RWPE1 (cell line): ENCODE measurements at regions of chr2 and their contacts with region 1.

Region 1: GRCh38 chr2:69538872-69539548 is 101.8 kb upstream of the NFU1 start:
- DNase-seq: peak; percentile 41
- H3K27ac ChIP-seq: no peak overlapping the region
- CTCF ChIP-seq: no peak

Region 2: DNA sequence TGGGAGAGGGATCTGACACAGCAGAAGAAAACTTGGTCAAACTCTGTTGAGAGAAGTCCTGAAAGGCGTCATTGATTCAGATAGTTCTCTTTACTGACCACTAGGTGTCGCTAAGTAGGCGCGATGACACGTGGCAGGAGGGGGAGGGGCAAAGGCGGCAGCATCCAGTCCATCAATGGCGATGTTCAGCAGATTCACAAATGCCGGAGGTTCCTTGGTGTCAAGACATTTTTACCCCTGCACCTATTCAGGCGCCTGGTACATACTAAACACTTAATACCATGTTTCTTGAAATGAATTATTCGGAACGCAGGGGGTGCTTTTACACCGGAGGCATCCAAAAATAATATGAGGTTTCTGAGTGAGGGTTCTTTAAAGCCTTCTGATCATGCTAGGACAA is 1176.9 kb before region 1 on chr2:
- CTCF ChIA-PET with region 1: no interaction called
- POLR2A ChIA-PET with region 1: no interaction called
- DNase-seq: peak; percentile 64
- H3K27ac ChIP-seq: no peak overlapping the region
- CTCF ChIP-seq: peak; percentile 65

Region 3: DNA sequence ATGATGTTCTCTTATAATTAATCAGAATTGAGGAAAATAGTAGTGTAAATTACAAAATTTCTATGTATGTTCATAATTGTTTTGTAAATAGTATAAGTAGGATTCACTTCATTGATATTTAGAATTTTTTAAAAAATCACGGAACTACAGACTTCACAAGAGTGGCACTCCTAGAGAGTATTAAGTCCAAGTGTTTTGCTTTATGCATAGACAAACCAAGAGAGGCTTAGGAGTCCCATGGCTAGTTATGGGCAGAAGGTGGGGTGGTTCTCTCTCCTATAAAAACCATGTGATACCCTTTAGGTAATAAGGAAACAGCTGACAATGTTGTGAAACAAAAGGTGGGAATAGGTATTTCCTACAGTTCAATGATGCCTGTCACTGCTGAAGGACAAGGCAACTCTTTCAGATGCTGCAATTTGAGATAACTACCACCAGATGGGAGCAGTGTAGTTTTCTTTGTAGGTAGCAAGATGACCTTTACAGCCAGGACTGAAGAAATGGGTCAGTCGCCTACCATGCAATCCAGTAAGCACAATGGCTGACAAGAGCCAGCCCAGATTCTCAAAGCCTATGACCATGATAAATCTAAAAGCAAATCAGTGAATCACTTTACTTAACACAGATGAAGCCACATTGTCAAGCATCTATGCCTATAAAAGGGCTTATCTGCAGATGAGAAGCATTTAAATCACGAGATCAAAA is 20.6 kb after region 1 on chr2:
- CTCF ChIA-PET with region 1: no interaction called
- POLR2A ChIA-PET with region 1: no interaction called
- DNase-seq: peak; percentile 54
- H3K27ac ChIP-seq: no peak overlapping the region
- CTCF ChIP-seq: peak; percentile 55

Region 4: DNA sequence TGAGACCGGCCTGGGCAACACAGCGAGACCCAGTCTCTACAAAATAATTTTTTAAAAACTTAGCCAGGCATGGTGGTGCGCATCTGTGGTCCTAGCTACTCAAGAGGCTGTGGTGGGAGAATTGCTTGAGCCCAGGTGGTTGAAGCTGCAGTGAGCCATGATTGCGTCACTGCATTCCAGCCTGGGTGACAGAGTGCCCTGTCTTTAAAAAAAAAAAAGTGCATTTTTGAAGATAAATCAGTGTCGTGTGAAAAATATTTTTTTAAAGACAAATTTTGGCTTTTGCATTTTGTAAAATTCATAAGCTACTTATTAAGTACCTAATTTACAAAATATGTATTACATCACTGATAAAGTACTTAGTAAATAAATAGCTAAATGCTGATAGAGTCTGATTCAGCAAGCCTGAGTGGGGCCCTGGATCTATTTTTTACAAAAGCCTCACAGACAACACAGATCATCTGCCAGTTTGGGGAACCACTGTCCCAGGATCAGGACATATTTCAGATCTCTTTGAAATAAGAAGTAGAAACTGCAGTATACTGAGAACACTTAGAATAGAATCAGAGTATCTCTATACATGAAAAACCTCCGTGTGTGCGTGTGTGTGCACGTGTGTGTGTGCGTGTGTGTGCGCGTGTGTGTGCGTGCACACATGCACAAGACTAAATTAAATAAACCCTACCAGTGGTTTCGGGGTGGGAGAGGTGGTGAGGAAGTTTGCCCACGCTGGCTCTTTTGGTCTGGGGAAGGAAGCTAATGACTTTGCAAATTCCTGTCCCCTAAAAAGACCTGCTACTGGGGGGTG is 43.0 kb after region 1 on chr2:
- CTCF ChIA-PET with region 1: interaction called, 10 read pairs
- POLR2A ChIA-PET with region 1: no interaction called
- DNase-seq: no peak
- H3K27ac ChIP-seq: no peak overlapping the region
- CTCF ChIP-seq: no peak